Activated CD4-positive, alpha-beta T cell treated with anti-CD3 and anti-CD28 coated beads, Interleukin-2, amount 10 ng/mL, durations not matched to agents 24 days and 14 days (primary cell): ENCODE measurements at regions of chr3 and their contacts with region 1.

Region 1: GRCh38 chr3:94011233-94011711 is 17.1 kb downstream of the STX19 start:
- DNase-seq: peak; percentile 58
- H3K4me3 Mint-ChIP-seq: peak overlapping the region; percentile 51
- H3K27ac Mint-ChIP-seq: peak overlapping the region; percentile 85
- H3K4me1 Mint-ChIP-seq: peaks cover 41% of the 10 kb centered on the region
- H3K27me3 Mint-ChIP-seq: no peaks in the 10 kb centered on the region

Region 2: GRCh38 chr3:93973131-93974126 is 37.8 kb before region 1 on chr3 and contains the start of gene PROS1:
- intact Hi-C with region 1: loop called (anchors 2 kb)
- DNase-seq: peak; percentile 87
- H3K4me3 Mint-ChIP-seq: peak within 1 kb of the TSS; percentile 80
- H3K27ac Mint-ChIP-seq: peak within 1 kb of the TSS; percentile 75
- H3K4me1 Mint-ChIP-seq: peaks cover 13% of the 10 kb centered on the region
- H3K27me3 Mint-ChIP-seq: peaks cover 9% of the 10 kb centered on the region
- total RNA-seq, gene PROS1: 0.85 and 1.3 TPM in 2 replicates

Region 3: DNA sequence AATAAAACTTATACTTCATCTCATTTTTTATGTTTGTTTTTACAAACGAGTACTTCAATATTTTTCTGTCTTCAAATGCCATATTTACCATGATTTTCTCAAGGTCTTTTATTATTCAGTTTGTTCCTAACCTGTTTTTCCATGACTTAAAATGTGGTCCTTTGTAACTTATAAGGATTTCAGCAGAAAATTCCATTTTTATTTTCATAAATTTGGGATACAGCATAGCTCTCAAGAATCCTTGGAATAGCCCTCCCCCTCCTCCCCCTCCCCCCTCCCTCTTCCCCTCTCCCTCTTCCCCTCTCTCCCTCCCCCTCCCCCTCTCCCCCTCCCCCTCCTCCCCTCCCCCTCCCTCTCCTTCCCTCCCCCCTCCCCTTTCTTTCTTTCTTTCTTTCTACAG is 32.0 kb after region 1 on chr3:
- intact Hi-C with region 1: loop called (anchors 2 kb)
- DNase-seq: no peak
- H3K4me3 Mint-ChIP-seq: no peak overlapping the region
- H3K27ac Mint-ChIP-seq: peak overlapping the region; percentile 41
- H3K4me1 Mint-ChIP-seq: no peaks in the 10 kb centered on the region
- H3K27me3 Mint-ChIP-seq: no peaks in the 10 kb centered on the region

Region 4: GRCh38 chr3:94062431-94063404 is 51.4 kb after region 1 on chr3 and contains the starts of genes DHFR2 and NSUN3:
- intact Hi-C with region 1: loop called (anchors 1 kb)
- DNase-seq: peak; percentile 95
- H3K4me3 Mint-ChIP-seq: peak within 1 kb of the TSS; percentile 98
- H3K27ac Mint-ChIP-seq: peak within 1 kb of the TSS; percentile 99
- H3K4me1 Mint-ChIP-seq: peaks cover 42% of the 10 kb centered on the region
- H3K27me3 Mint-ChIP-seq: no peaks in the 10 kb centered on the region
- total RNA-seq, gene DHFR2: 10.0 and 11.3 TPM in 2 replicates
- total RNA-seq, gene NSUN3: 15.3 and 17.9 TPM in 2 replicates

Region 5: GRCh38 chr3:94413724-94414111 is 402.4 kb after region 1 on chr3:
- intact Hi-C with region 1: no loop called
- DNase-seq: no peak
- H3K4me3 Mint-ChIP-seq: no peak overlapping the region
- H3K27ac Mint-ChIP-seq: no peak overlapping the region
- H3K4me1 Mint-ChIP-seq: no peaks in the 10 kb centered on the region
- H3K27me3 Mint-ChIP-seq: no peaks in the 10 kb centered on the region